IMR-90 (cell line): ENCODE measurements at regions of chr11 and their contacts with region 1.

Region 1: DNA sequence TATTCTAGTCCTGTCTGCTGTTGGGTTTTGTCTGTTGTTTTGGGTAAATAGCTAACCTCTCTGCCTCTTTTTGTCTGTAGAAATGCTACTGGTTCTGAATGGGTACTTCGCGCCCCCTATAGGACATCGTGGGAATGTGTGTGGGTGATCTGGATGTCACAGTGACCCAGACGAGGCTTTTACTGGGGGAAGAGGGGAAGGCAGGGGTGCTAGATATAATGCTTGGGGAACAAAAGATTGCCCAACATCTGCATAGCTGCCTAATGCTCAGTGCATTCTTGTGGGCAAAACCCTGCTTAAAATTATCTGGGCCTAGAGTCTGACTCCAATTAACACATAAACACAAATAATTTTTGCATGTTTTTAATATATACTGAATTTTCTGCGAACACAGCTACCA is 57.7 kb downstream of the BMAL1 start:
- DNase-seq: peak; percentile 66
- ATAC-seq: peak; percentile 23
- H3K4me3 ChIP-seq: no peak overlapping the region
- H3K27ac ChIP-seq: no peak overlapping the region
- H3K4me1 ChIP-seq: peaks cover 29% of the 10 kb centered on the region
- H3K27me3 ChIP-seq: no peaks in the 10 kb centered on the region
- CTCF ChIP-seq: peak; percentile 78
- POLR2A ChIP-seq: no peak
- RAD21 ChIP-seq: peak; percentile 72

Region 2: DNA sequence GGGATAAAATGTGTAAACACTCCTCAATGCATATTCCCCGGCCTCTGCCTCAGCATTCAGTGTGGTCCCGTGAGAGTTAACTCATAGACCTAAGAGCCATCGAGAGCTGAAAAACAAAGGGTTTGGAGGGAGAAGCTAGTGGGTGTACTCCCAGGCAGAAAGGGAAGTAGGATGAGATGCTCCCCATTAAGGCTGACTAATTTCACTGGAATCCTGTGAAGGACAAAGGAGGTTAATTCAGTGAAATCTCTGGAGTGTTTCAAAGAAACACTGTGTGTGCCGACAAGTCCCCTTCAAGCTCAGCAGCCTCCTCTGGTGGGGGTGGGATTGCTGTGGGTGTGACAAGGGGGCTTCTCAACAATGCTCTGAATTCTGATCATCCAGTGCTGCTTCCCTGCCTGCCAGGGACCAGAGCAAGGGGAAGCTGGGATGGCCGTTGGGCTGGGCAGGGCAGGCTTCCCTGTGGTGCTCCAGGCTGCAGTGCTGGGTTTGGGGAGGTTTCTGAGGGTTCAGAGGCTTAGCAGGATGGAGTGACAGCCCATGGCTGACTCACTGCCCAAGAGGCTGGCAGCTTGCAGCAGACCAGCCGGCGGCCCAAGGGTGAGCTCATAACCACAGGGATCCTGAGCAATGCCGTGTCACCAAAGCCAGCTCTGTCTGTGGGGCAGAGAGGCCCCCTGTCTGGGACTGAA is 119.2 kb before region 1 on chr11:
- CTCF ChIA-PET with region 1: interaction called, 13 read pairs
- POLR2A ChIA-PET with region 1: no interaction called
- dilution Hi-C with region 1: no loop called
- in situ Hi-C with region 1: no loop called
- intact Hi-C with region 1: loop called (anchors 1 kb)
- DNase-seq: peak; percentile 98
- ATAC-seq: peak; percentile 90
- H3K4me3 ChIP-seq: peak overlapping the region; percentile 16; the same call in 1 of the 2 replicates
- H3K27ac ChIP-seq: peak overlapping the region; percentile 98
- H3K4me1 ChIP-seq: peaks cover 20% of the 10 kb centered on the region
- H3K27me3 ChIP-seq: no peaks in the 10 kb centered on the region
- CTCF ChIP-seq: 0 out of 2 replicates have a peak, but pooled peaks have one; percentile 3
- POLR2A ChIP-seq: peak; percentile 75
- RAD21 ChIP-seq: no peak; the same call in 1 of the 2 replicates

Region 3: DNA sequence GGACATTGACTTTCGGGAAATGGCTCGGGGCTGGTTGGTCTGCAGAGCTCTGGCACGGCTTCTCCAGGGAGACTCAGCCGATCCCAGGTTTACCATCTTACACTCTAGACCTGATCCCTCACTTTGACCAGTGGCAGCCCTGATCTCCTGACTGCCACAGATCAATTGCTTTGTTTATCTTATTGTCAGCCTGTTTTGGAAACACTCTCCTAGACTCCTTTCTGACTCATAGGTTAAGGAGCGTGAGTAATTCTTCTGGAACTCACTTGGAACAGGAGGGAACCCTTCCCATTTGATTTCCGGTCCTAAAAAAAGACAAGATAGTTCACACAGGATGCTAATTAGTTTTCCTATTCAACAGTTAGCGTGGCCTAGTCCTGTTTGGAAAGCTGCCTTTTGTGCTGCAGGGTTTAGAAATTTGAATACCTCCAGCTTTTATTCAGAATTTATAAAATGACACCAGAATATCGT is 73.7 kb before region 1 on chr11:
- CTCF ChIA-PET with region 1: interaction called, 3 read pairs
- POLR2A ChIA-PET with region 1: no interaction called
- dilution Hi-C with region 1: no loop called
- in situ Hi-C with region 1: no loop called
- intact Hi-C with region 1: loop called (anchors 5 kb)
- DNase-seq: peak; percentile 87
- ATAC-seq: peak; percentile 84
- H3K4me3 ChIP-seq: no peak overlapping the region
- H3K27ac ChIP-seq: peak overlapping the region; percentile 83
- H3K4me1 ChIP-seq: peaks cover 17% of the 10 kb centered on the region
- H3K27me3 ChIP-seq: no peaks in the 10 kb centered on the region
- CTCF ChIP-seq: no peak
- POLR2A ChIP-seq: no peak
- RAD21 ChIP-seq: no peak

Region 4: GRCh38 chr11:13318498-13319295 is 16.6 kb before region 1 on chr11:
- CTCF ChIA-PET with region 1: interaction called, 13 read pairs
- POLR2A ChIA-PET with region 1: no interaction called
- dilution Hi-C with region 1: no loop called
- in situ Hi-C with region 1: no loop called
- intact Hi-C with region 1: no loop called
- DNase-seq: no peak
- ATAC-seq: no peak
- H3K4me3 ChIP-seq: no peak overlapping the region
- H3K27ac ChIP-seq: no peak overlapping the region
- H3K4me1 ChIP-seq: peaks cover 4% of the 10 kb centered on the region
- H3K27me3 ChIP-seq: no peaks in the 10 kb centered on the region
- CTCF ChIP-seq: no peak
- POLR2A ChIP-seq: no peak
- RAD21 ChIP-seq: no peak